Activated CD4-positive, alpha-beta T cell treated with anti-CD3 and anti-CD28 coated beads, Interleukin-2, amount 10 ng/mL, durations not matched to agents 7 days and 5 days (primary cell): ENCODE measurements at regions of chr6 and their contacts with region 1.

Region 1: GRCh38 chr6:11769811-11770545 is 8.6 kb downstream of the ADTRP start:
- DNase-seq: no peak
- H3K4me3 Mint-ChIP-seq: no peak overlapping the region
- H3K27ac Mint-ChIP-seq: no peak overlapping the region
- H3K4me1 Mint-ChIP-seq: no peaks in the 10 kb centered on the region
- H3K27me3 Mint-ChIP-seq: no peaks in the 10 kb centered on the region

Region 2: DNA sequence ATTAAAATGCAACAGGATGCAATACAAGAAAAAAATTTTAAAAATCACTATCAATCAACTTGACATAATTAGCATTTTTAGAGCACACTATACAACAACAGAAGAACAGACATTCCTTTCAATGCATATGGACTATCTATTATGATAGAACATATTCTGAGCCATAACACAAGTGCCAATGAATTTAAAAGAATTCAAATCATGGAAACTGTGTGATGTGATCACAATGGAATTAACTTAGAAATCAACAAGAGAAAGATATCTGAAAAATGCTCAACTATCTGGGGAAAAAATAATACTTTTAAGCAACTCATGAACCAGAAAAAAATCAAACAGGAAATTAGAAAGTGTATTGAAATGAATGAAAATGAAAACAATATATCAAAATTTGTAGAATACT is 97.7 kb before region 1 on chr6:
- CTCF ChIA-PET with region 1: no interaction called
- POLR2A ChIA-PET with region 1: no interaction called
- DNase-seq: no peak
- H3K4me3 Mint-ChIP-seq: no peak overlapping the region
- H3K27ac Mint-ChIP-seq: no peak overlapping the region
- H3K4me1 Mint-ChIP-seq: peaks cover 4% of the 10 kb centered on the region
- H3K27me3 Mint-ChIP-seq: peaks cover 11% of the 10 kb centered on the region

Region 3: DNA sequence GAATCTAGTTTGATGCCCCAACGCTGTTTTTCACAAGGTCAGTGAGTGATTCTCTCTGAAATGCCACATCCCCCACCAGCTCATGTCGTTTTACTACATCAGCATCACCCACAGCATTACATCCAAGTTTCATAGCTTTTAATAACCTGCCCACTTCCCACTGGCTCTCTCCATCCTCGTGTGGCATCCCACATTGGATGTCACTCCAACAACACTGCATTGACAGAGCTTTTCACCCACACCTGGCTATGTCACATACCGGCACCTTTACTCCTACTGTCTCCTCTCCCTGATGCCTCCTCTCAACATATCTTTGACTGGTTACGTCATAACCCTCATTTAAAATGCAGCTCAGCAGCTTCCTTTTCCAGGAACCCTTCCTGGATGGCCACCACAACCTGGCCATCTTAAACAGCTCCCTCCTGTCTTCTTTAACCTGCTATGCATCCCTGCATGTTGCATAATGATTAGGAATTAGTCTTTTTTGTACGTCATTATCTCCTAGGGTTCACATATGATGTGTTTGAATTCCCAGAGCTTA is 13.6 kb after region 1 on chr6:
- CTCF ChIA-PET with region 1: interaction called, 10 read pairs
- POLR2A ChIA-PET with region 1: no interaction called
- DNase-seq: no peak
- H3K4me3 Mint-ChIP-seq: no peak overlapping the region
- H3K27ac Mint-ChIP-seq: no peak overlapping the region
- H3K4me1 Mint-ChIP-seq: peaks cover 7% of the 10 kb centered on the region
- H3K27me3 Mint-ChIP-seq: no peaks in the 10 kb centered on the region

Region 4: GRCh38 chr6:11798096-11798495 is 28.1 kb after region 1 on chr6:
- CTCF ChIA-PET with region 1: no interaction called
- POLR2A ChIA-PET with region 1: no interaction called
- DNase-seq: no peak
- H3K4me3 Mint-ChIP-seq: no peak overlapping the region
- H3K27ac Mint-ChIP-seq: no peak overlapping the region
- H3K4me1 Mint-ChIP-seq: no peaks in the 10 kb centered on the region
- H3K27me3 Mint-ChIP-seq: no peaks in the 10 kb centered on the region